MCF 10A (cell line): ENCODE measurements at regions of chr6 and their contacts with region 1.

Region 1: DNA sequence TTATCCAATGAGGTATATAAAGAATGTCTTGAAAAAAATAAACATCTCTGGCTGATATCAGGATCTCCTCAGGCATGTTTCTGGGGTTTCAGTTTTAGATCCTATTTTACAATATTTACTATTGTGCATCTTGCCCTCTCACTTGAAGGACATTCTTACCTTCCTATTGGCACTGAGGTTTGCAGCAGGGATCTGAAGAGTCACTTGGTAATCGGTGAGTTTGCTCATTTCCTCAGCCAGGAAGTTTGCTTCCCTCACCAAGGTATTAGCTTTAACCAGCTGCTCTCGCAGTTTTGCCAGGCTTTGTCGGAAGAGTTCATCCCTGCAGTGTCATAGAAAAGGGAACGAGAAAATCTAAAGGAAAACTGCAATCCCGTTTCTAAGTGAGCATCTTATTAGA is 101.9 kb upstream of the NUP153 start:
- DNase-seq: no peak
- H3K4me3 Mint-ChIP-seq: no peak overlapping the region
- H3K27ac Mint-ChIP-seq: no peak overlapping the region
- H3K4me1 Mint-ChIP-seq: peaks cover 6% of the 10 kb centered on the region
- H3K27me3 Mint-ChIP-seq: no peaks in the 10 kb centered on the region
- CTCF ChIP-seq: no peak

Region 2: GRCh38 chr6:17156112-17156921 is 652.3 kb before region 1 on chr6:
- CTCF ChIA-PET with region 1: interaction called, 24 read pairs
- POLR2A ChIA-PET with region 1: no interaction called
- intact Hi-C with region 1: loop called (anchors 1 kb)
- DNase-seq: peak; percentile 81
- H3K4me3 Mint-ChIP-seq: no peak overlapping the region
- H3K27ac Mint-ChIP-seq: no peak overlapping the region
- H3K4me1 Mint-ChIP-seq: no peaks in the 10 kb centered on the region
- H3K27me3 Mint-ChIP-seq: no peaks in the 10 kb centered on the region
- CTCF ChIP-seq: peak; percentile 65

Region 3: GRCh38 chr6:17493286-17493685 is 315.3 kb before region 1 on chr6:
- CTCF ChIA-PET with region 1: no interaction called
- POLR2A ChIA-PET with region 1: no interaction called
- intact Hi-C with region 1: no loop called
- DNase-seq: peak; percentile 73
- H3K4me3 Mint-ChIP-seq: no peak overlapping the region
- H3K27ac Mint-ChIP-seq: peak overlapping the region; percentile 77
- H3K4me1 Mint-ChIP-seq: peaks cover 11% of the 10 kb centered on the region
- H3K27me3 Mint-ChIP-seq: no peaks in the 10 kb centered on the region
- CTCF ChIP-seq: no peak

Region 4: DNA sequence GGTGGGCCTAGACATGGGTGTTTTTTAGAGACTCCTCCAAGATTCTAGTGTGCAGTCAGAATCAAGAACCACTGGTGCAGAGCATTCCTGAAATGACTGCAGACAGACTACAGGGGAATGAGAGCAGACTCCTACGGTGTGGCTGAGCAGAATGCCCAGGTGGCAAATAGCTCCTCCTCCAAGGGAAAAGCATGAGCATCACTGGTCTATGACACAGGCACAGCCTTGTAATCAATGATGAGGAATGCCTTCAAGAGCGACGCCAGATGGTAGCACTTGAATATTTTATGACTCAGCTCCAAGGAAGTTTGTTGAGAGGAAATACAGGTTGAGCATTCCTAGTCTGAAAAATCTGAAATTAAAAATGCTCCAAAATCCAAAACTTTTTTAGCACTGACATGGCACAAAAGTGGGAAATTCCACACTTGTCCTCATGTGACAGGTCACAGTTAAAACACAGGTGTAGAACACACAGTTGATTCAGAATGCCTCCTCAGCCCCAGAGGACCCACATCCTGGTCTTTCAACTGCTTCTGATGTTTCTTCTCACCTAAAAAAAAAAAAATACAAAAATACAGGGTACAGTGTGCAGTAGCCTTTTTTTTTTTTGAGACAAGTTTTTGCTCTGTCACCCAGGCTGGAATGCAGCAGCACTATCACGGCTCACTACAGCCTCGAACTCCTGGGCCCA is 219.1 kb before region 1 on chr6:
- CTCF ChIA-PET with region 1: interaction called, 14 read pairs
- POLR2A ChIA-PET with region 1: no interaction called
- intact Hi-C with region 1: loop called (anchors 1 kb)
- DNase-seq: peak; percentile 74
- H3K4me3 Mint-ChIP-seq: no peak overlapping the region
- H3K27ac Mint-ChIP-seq: no peak overlapping the region
- H3K4me1 Mint-ChIP-seq: no peaks in the 10 kb centered on the region
- H3K27me3 Mint-ChIP-seq: no peaks in the 10 kb centered on the region
- CTCF ChIP-seq: no peak

Region 5: DNA sequence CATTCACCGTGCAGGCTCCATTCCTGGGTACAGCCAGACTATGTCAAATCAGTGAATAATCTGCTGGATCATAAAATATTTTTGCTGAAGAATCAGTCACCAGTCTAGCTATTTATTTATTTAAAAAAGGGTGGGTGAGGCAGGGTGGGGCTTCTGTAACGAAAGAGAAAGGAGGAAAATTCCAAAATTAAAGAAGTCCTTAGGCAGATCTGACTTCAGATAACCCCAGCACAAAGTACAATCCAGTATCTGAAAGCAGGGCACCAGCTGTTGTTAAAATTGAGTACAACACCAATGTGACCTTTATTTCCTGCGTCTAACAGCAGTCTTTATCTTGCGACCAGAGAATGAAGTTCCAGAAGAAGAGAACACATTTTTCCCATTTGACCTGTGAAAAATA is 192.8 kb before region 1 on chr6:
- CTCF ChIA-PET with region 1: no interaction called
- POLR2A ChIA-PET with region 1: no interaction called
- intact Hi-C with region 1: no loop called
- DNase-seq: no peak
- H3K4me3 Mint-ChIP-seq: no peak overlapping the region
- H3K27ac Mint-ChIP-seq: no peak overlapping the region
- H3K4me1 Mint-ChIP-seq: no peaks in the 10 kb centered on the region
- H3K27me3 Mint-ChIP-seq: no peaks in the 10 kb centered on the region
- CTCF ChIP-seq: no peak